ENCODE measurements at regions of chr1 and their contacts with region 1.

Region 1: DNA sequence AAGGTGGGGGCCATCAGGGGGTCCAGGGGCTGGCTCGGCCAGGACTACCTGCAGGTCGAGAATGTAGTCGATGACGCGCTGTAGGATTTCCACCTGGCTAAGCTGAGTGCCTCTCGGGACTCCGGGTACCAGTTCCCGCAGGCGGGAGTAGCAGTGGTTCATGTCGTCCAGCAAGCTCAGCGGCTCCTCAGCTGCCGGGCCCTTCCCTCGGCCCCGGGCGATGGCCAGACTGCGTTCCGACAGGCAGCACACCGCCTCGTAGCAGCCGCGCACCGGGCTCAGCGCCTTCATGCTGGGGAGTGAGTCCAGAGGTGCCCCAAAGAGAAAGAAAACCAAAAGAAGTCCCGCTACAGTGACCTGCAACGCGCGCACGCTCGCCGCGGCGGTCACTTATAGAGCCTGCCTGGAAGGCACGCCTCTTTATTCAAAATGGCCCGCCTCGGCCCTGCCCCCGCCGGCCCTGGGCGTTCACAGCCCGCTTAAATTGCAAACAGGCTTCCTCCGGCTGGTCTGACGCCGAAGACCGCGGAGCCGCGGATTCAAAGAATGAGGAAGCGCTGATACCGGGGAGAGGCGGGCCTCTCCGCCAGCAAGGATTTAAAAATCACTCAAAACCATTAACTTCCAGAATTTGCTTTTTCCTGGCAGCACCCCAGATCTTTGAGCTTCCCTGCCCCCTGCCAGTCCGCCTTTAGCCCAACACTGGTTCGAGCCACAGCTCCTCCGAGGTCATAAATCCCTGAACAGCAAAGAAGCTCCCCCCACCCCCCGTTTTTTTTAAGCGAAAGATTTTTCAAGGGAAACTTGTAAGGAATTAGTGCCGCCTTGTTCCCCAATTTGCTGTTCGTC is at the start of gene ID3:
- DNase-seq: peak; percentile 83 to 96 (median 91)
- ATAC-seq: peak; percentile 57
- H3K4me3 ChIP-seq: peak within 1 kb of the TSS; percentile 82 to 96
- H3K4me3 Mint-ChIP-seq: peak within 1 kb of the TSS; percentile 81
- H3K27ac ChIP-seq: peak within 1 kb of the TSS; percentile 50 to 83
- H3K27ac Mint-ChIP-seq: peak within 1 kb of the TSS; percentile 99
- H3K4me1 ChIP-seq: peaks cover 54% of the 10 kb centered on the region
- H3K4me1 Mint-ChIP-seq: peaks cover 61% of the 10 kb centered on the region
- H3K27me3 ChIP-seq: no peaks in the 10 kb centered on the region
- H3K27me3 Mint-ChIP-seq: no peaks in the 10 kb centered on the region
- CTCF ChIP-seq: no peak
- total RNA-seq, gene ID3: 44.2 to 48.1 TPM

Region 2: GRCh38 chr1:23496490-23497181 is 62.7 kb before region 1 on chr1:
- CTCF ChIA-PET with region 1: interaction called, 17 read pairs
- POLR2A ChIA-PET with region 1: interaction called, 3 read pairs
- intact Hi-C with region 1: no loop called
- DNase-seq: no peak
- ATAC-seq: peak; percentile 23
- H3K4me3 ChIP-seq: no peak overlapping the region
- H3K4me3 Mint-ChIP-seq: no peak overlapping the region
- H3K27ac ChIP-seq: no peak overlapping the region
- H3K27ac Mint-ChIP-seq: no peak overlapping the region
- H3K4me1 ChIP-seq: no peaks in the 10 kb centered on the region
- H3K4me1 Mint-ChIP-seq: no peaks in the 10 kb centered on the region
- H3K27me3 ChIP-seq: no peaks in the 10 kb centered on the region
- H3K27me3 Mint-ChIP-seq: peaks cover 4% of the 10 kb centered on the region
- CTCF ChIP-seq: no peak

Region 3: GRCh38 chr1:23577056-23578004 is 18.0 kb after region 1 on chr1:
- CTCF ChIA-PET with region 1: interaction called, 9 read pairs
- POLR2A ChIA-PET with region 1: interaction called, 10 read pairs
- intact Hi-C with region 1: loop called in 1 of 2 experiments (anchors 2 kb)
- DNase-seq: no peak
- ATAC-seq: peak; percentile 74
- H3K4me3 ChIP-seq: no peak overlapping the region
- H3K4me3 Mint-ChIP-seq: peak overlapping the region; percentile 50
- H3K27ac ChIP-seq: peak overlapping the region; percentile 7 to 10
- H3K27ac Mint-ChIP-seq: peak overlapping the region; percentile 87
- H3K4me1 ChIP-seq: peaks cover 60% of the 10 kb centered on the region
- H3K4me1 Mint-ChIP-seq: peaks cover 62% of the 10 kb centered on the region
- H3K27me3 ChIP-seq: no peaks in the 10 kb centered on the region
- H3K27me3 Mint-ChIP-seq: no peaks in the 10 kb centered on the region
- CTCF ChIP-seq: no peak

Region 4: GRCh38 chr1:23598424-23598823 is 39.1 kb after region 1 on chr1:
- CTCF ChIA-PET with region 1: interaction called, 26 read pairs
- POLR2A ChIA-PET with region 1: interaction called, 52 read pairs
- intact Hi-C with region 1: loop called (anchors 1 to 2 kb)
- DNase-seq: no peak
- ATAC-seq: no peak
- H3K4me3 ChIP-seq: peak overlapping the region in 1 of 2 experiments; percentile 1
- H3K4me3 Mint-ChIP-seq: no peak overlapping the region
- H3K27ac ChIP-seq: peak overlapping the region in 1 of 2 experiments; percentile 53
- H3K27ac Mint-ChIP-seq: no peak overlapping the region
- H3K4me1 ChIP-seq: peaks cover 94% of the 10 kb centered on the region
- H3K4me1 Mint-ChIP-seq: peaks cover 93% of the 10 kb centered on the region
- H3K27me3 ChIP-seq: no peaks in the 10 kb centered on the region
- H3K27me3 Mint-ChIP-seq: no peaks in the 10 kb centered on the region
- CTCF ChIP-seq: no peak

Region 5: DNA sequence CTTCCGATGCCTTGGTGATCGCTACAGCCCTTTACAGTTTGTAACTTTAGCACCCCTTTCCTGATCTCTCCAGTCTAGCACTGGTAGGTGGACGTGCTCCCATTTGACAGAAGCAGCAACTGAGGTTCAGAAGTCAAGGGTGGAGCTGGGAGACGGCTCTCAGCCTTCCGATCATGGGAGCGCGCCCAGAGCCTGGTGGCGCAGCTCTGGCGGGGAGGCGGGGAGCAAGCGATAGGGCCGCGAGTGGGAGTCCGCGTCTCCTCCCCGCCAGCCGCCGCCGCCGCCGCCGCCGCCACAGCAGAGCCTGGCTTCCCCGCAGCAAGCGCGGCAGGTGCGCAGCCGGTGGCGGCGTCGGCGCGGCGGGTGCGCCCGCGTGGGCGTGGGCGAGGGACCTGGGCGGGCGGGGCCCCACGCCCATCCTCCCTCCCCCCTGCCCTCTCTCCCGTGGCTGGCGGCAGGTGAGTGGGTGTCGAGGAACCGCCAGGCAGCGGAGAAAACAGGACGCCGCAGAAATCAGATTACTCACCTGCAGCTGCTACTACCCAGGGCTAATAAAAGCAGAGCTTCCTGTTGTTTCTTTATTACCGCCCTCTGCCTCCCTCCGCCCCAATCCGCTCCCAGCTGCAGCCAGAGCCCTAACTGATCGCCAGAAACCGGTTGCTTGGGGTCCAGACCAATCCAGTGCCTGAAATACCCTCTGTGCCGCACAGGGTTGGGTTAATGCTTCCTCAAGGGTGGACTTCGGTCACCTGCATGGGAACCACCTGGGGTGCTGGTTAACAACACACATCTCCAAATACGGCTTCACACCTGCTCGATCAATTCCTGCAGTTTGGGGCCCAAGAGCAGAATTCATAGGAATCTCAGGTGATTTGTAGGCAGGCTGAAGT is 60.2 kb after region 1 on chr1:
- CTCF ChIA-PET with region 1: interaction called, 44 read pairs
- POLR2A ChIA-PET with region 1: interaction called, 61 read pairs
- intact Hi-C with region 1: loop called (anchors 1 to 2 kb)
- DNase-seq: peak; percentile 66 to 92 (median 85)
- ATAC-seq: peak; percentile 84
- H3K4me3 ChIP-seq: peak overlapping the region; percentile 44 to 50
- H3K4me3 Mint-ChIP-seq: peak overlapping the region; percentile 72
- H3K27ac ChIP-seq: peak overlapping the region; percentile 62 to 68
- H3K27ac Mint-ChIP-seq: peak overlapping the region; percentile 95
- H3K4me1 ChIP-seq: peaks cover 80% of the 10 kb centered on the region
- H3K4me1 Mint-ChIP-seq: peaks cover 89% of the 10 kb centered on the region
- H3K27me3 ChIP-seq: no peaks in the 10 kb centered on the region
- H3K27me3 Mint-ChIP-seq: no peaks in the 10 kb centered on the region
- CTCF ChIP-seq: no peak

Region 6: GRCh38 chr1:23634842-23635651 is 75.7 kb after region 1 on chr1:
- CTCF ChIA-PET with region 1: interaction called, 1,167 read pairs
- POLR2A ChIA-PET with region 1: interaction called, 47 read pairs
- intact Hi-C with region 1: loop called (anchors 2 kb)
- DNase-seq: peak in 7 of 9 experiments; percentile 29 to 83 (median 58)
- ATAC-seq: peak; percentile 92
- H3K4me3 ChIP-seq: peak overlapping the region; percentile 46 to 52
- H3K4me3 Mint-ChIP-seq: peak overlapping the region; percentile 76
- H3K27ac ChIP-seq: peak overlapping the region; percentile 5 to 18
- H3K27ac Mint-ChIP-seq: peak overlapping the region; percentile 92
- H3K4me1 ChIP-seq: peaks cover 25% of the 10 kb centered on the region
- H3K4me1 Mint-ChIP-seq: peaks cover 33% of the 10 kb centered on the region
- H3K27me3 ChIP-seq: no peaks in the 10 kb centered on the region
- H3K27me3 Mint-ChIP-seq: no peaks in the 10 kb centered on the region
- CTCF ChIP-seq: peak; percentile 89

Region 7: DNA sequence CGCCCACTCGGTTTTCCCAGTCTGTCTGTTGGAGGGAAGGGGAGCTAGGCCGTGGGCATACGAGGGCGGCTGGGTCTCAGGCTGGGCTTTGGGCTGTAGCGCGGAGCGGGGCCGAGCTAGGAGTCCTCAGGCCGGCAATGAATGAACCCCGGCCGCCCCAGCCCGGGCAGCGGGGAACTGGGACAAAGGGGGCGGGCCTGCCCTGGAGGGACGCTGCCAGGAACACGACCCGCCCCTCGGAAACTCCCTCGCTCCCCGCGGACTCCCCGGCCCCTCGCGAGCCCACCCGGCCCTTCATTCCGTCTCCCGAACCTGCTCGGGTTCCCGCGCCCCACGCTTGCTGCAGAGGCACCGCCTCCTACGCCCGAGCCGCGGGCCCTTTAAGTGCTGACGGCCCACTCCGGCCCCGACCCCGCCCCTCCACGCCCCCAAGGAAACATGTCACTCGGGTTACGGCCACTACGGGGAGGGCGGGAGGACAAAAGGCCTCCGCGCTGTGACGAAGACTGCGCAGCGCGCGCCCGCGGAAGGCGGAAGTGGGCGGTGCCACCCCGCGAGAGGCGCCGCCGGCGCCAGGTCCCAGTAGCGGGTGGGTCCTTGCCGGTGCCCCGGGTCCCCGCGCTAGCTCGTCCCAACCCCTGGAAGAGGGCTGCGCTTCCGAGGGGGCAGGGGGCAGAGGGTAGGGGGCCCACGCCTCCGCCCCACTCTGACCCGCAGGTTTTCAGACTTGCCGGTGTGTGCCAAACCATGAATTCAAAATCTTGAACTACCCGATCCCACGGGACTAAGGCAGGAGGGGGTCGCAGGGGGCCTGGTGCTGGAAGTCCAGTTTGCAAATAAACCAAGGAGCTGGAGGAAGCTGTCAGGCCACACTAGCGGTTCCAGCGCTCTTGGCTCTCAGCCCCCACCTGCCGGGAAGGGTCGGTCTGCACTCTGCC is 241.3 kb after region 1 on chr1 and contains the start of gene GALE:
- CTCF ChIA-PET with region 1: no interaction called
- POLR2A ChIA-PET with region 1: no interaction called
- intact Hi-C with region 1: loop called in 1 of 2 experiments (anchors 10 kb)
- DNase-seq: peak; percentile 95 to 98 (median 97)
- ATAC-seq: peak; percentile 93
- H3K4me3 ChIP-seq: peak within 1 kb of the TSS; percentile 57 to 66
- H3K4me3 Mint-ChIP-seq: peak within 1 kb of the TSS; percentile 93
- H3K27ac ChIP-seq: peak within 1 kb of the TSS; percentile 78 to 82
- H3K27ac Mint-ChIP-seq: peak within 1 kb of the TSS; percentile 91
- H3K4me1 ChIP-seq: peaks cover 18% of the 10 kb centered on the region
- H3K4me1 Mint-ChIP-seq: peaks cover 12% of the 10 kb centered on the region
- H3K27me3 ChIP-seq: no peaks in the 10 kb centered on the region
- H3K27me3 Mint-ChIP-seq: no peaks in the 10 kb centered on the region
- CTCF ChIP-seq: no peak
- total RNA-seq, gene GALE: 4.6 to 4.7 TPM

Measured in CD8-positive, alpha-beta T cell (primary cell).